ENCODE measurements at regions of chr12 and their contacts with region 1.

Region 1: DNA sequence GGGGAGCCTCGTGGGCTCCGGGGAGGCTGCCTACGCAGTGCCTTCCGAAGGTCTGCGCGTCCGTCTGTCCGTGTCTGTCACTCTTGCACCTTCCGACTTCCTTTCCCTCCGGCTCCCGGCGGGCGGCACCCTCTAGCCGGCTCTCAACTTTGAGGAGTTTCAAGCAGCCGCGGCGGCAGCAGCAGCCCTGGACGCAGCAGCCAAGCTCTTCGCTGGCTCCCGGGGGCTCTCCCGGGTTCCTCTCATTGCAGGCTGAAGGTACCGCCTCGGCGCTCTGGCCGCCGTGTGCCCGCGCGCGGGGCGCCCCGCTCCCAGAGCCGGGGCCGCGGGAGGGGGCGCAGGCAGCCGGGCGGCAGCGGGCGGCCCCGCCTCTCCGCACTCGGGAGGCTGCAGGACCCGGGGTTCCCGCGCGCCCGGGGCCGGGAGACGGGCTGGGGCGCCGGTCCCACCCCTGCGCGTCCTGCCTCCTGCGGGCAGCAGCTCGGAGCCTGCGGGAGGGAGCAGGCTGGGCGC is at the starts of genes AMIGO2 and PCED1B:
- DNase-seq: peak; percentile 84
- ATAC-seq: peak; percentile 62
- H3K4me3 Mint-ChIP-seq: peak within 1 kb of the TSS; percentile 87
- H3K27ac Mint-ChIP-seq: peak within 1 kb of the TSS; percentile 80
- H3K4me1 Mint-ChIP-seq: peaks cover 63% of the 10 kb centered on the region
- H3K27me3 Mint-ChIP-seq: no peaks in the 10 kb centered on the region
- total RNA-seq, gene AMIGO2: 11.6 to 14.2 TPM
- total RNA-seq, gene PCED1B: 44.3 to 63.2 TPM

Region 2: DNA sequence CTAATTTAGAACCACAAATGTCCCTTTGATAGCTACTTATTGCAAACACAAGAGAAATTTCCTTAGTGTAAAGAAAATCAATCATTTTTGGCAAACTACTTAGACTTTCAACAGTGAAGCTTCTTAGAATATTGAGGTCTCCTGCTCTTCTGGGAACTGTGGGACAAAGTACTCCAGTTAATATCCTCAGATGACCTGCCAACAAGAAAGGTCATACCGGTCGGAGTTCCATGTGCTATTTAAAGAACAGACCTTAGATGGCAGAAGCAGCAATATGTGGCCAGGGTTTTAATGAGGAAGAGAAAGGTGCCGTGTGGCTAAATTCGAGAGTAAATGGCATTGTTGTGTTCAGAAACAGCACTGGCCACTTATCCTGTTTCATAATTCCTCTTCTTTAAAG is 115.0 kb after region 1 on chr12:
- CTCF ChIA-PET with region 1: interaction called, 17 read pairs
- DNase-seq: no peak
- ATAC-seq: no peak
- H3K4me3 Mint-ChIP-seq: no peak overlapping the region
- H3K27ac Mint-ChIP-seq: peak overlapping the region; percentile 88
- H3K4me1 Mint-ChIP-seq: peaks cover 56% of the 10 kb centered on the region
- H3K27me3 Mint-ChIP-seq: no peaks in the 10 kb centered on the region

Region 3: DNA sequence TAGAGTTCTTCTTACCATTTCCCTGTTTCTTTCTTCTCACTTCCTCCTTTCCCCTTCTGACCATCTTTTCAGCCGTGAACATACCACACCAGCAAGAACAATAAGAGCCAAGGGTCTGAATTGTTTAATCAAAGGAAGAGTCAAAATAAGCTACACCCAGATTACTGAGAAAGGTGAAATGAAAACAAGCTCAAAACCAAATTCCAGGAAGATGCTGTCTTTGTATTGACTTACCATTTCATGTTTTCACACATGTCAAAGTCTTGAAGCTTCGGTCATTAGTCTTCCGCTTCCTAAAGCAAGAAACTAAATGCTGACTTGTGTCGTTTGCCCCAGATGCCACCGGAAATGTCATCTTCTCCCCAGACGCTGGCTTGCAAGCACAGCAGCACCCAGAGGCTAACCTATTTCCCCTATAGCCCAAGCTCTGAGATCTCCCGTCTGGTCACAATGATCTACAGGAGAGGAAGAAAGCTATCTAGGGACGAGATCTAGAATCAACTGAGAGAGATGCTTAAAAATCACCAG is 136.7 kb after region 1 on chr12:
- CTCF ChIA-PET with region 1: interaction called, 17 read pairs
- DNase-seq: peak; percentile 92
- ATAC-seq: peak; percentile 60
- H3K4me3 Mint-ChIP-seq: peak overlapping the region; percentile 87
- H3K27ac Mint-ChIP-seq: peak overlapping the region; percentile 97
- H3K4me1 Mint-ChIP-seq: peaks cover 52% of the 10 kb centered on the region
- H3K27me3 Mint-ChIP-seq: no peaks in the 10 kb centered on the region